Activated CD4-positive, alpha-beta T cell treated with anti-CD3 and anti-CD28 coated beads, Interleukin-2, amount 10 ng/mL, durations not matched to agents 24 days and 14 days (primary cell): ENCODE measurements at regions of chr15 and their contacts with region 1.

Region 1: DNA sequence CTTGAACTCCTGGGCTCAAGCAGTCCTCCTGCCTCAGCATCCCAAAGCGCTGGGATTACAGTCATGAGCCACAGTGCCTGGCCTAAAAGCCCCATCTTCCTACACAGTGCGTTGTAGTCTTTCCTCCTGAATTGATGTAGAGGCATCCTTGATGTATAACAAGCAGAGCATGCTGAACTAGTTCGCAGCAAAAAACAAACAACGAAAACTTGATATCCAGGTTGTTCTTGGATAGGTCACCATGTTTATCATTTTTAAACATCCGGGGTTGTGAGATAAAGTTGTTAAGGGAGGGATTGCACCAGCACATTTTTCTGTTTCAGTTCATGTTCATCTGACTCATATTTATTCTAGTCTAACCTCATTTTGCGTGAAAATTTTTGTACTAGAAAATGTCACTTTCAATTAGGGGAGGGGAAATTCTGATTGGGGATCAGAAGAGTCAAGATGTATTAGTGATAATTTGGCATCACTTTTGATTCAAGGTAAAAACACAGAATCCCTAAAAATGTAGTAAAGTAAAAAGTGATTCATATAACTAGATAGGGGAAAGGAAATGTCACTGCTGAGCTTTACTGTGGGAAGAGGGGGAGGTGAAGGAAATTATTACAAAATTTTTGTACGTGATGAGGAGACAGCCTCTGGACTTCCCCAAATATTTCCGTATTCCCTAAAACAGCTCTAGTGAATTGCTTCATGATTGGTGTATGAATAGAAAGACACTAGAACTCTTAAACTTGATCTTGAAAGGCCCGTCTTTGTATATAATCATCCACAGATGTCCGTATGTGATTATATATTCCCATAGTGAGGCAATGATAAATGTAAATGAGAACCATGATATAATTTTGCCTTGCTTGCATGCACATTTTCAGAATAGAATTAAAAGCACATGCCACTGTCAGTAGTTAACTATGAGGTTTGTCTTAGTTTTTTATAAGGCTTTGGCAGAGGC is 22.9 kb downstream of the RAB8B start:
- DNase-seq: no peak
- H3K4me3 Mint-ChIP-seq: peak overlapping the region; percentile 56
- H3K27ac Mint-ChIP-seq: peak overlapping the region; percentile 94
- H3K4me1 Mint-ChIP-seq: peaks cover 64% of the 10 kb centered on the region
- H3K27me3 Mint-ChIP-seq: no peaks in the 10 kb centered on the region

Region 2: GRCh38 chr15:63030101-63030551 is 182.2 kb before region 1 on chr15:
- intact Hi-C with region 1: no loop called
- DNase-seq: no peak
- H3K4me3 Mint-ChIP-seq: no peak overlapping the region
- H3K27ac Mint-ChIP-seq: no peak overlapping the region
- H3K4me1 Mint-ChIP-seq: no peaks in the 10 kb centered on the region
- H3K27me3 Mint-ChIP-seq: peaks cover 20% of the 10 kb centered on the region

Region 3: GRCh38 chr15:63157118-63157843 is 55.0 kb before region 1 on chr15 and contains the start of gene RPS27L:
- intact Hi-C with region 1: loop called (anchors 2 kb)
- DNase-seq: peak; percentile 97
- H3K4me3 Mint-ChIP-seq: peak within 1 kb of the TSS; percentile 100
- H3K27ac Mint-ChIP-seq: peak within 1 kb of the TSS; percentile 100
- H3K4me1 Mint-ChIP-seq: peaks cover 16% of the 10 kb centered on the region
- H3K27me3 Mint-ChIP-seq: no peaks in the 10 kb centered on the region
- total RNA-seq, gene RPS27L: 167 and 179 TPM in 2 replicates

Region 4: DNA sequence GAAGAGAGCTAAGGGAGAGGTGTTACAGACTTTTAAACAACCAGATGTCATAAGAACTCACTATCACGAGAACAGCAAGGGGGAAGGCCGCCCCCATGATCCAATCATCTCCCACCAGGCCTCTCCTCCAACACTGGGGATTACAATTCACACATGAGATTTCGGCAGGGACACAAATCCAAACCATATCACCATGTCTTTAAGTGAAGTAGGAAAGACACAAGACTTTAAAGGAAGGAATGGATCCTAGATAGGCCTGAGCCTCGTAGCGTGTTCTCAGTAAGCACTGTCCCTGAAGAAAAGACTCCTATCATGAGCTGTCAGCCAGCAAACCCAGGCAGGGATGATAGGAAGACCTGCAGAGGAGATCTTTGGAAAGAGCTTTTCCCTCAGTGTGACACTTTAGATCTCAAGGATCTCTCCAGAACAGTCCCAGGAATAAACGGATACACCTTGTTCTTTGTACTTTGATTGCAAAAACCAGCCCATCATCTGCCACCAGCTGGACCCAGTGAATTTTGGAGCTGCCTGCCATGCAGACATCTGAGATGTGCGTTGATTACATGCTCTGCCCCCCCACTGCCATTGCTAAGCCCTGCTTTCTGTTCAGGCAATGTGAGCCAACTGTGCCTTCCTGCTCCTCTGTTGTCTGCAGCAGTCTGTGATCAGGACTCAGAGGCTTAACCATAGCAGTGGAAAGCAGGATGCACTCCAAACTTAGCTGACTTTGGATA is 39.8 kb before region 1 on chr15:
- intact Hi-C with region 1: loop called (anchors 1 kb)
- DNase-seq: no peak
- H3K4me3 Mint-ChIP-seq: no peak overlapping the region
- H3K27ac Mint-ChIP-seq: no peak overlapping the region
- H3K4me1 Mint-ChIP-seq: peaks cover 3% of the 10 kb centered on the region
- H3K27me3 Mint-ChIP-seq: no peaks in the 10 kb centered on the region

Region 5: GRCh38 chr15:63198371-63199250 is 13.7 kb before region 1 on chr15:
- intact Hi-C with region 1: loop called (anchors 1 kb)
- DNase-seq: no peak
- H3K4me3 Mint-ChIP-seq: peak overlapping the region; percentile 13
- H3K27ac Mint-ChIP-seq: peak overlapping the region; percentile 54
- H3K4me1 Mint-ChIP-seq: peaks cover 81% of the 10 kb centered on the region
- H3K27me3 Mint-ChIP-seq: no peaks in the 10 kb centered on the region

Region 6: DNA sequence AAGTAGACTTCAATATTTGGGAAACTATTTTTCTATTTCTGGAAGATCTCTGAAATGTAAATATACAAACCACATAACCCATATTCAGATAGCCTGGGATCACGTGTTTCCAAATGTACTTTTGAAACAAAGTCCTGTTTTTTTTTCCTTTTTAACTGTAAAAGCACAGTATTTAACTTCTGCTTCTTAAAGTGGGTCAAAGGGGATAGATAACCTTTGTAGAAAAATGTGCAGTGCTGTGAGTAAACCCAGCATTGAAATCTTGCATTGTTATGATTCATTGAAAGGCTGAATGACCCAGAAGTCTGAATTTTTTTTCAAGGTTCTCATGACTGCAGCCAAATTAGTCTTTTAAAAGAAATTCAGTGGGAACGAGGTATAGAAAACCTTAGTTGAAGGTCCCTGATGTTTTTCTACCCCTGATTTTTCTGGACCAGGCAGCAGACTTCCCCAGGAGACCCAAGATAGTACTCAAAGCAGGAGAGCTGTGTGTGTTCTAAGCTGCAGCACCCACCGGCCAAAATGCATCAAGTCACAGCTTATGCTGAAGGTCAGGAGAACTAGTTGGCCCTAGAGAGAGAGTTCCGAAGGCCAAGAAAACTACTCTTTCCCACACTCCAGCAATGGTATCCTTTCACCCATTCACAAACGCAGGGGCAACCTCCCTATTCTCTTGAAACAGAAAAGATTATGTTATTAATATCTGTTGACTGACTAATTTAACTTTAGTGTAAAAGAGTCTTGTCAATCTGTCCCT is 21.5 kb after region 1 on chr15:
- intact Hi-C with region 1: loop called (anchors 1 kb)
- DNase-seq: no peak
- H3K4me3 Mint-ChIP-seq: no peak overlapping the region
- H3K27ac Mint-ChIP-seq: peak overlapping the region; percentile 66
- H3K4me1 Mint-ChIP-seq: peaks cover 50% of the 10 kb centered on the region
- H3K27me3 Mint-ChIP-seq: no peaks in the 10 kb centered on the region

Region 7: GRCh38 chr15:63246691-63247464 is 34.6 kb after region 1 on chr15:
- intact Hi-C with region 1: loop called (anchors 5 kb)
- DNase-seq: no peak
- H3K4me3 Mint-ChIP-seq: no peak overlapping the region
- H3K27ac Mint-ChIP-seq: no peak overlapping the region
- H3K4me1 Mint-ChIP-seq: peaks cover 33% of the 10 kb centered on the region
- H3K27me3 Mint-ChIP-seq: no peaks in the 10 kb centered on the region

Region 8: DNA sequence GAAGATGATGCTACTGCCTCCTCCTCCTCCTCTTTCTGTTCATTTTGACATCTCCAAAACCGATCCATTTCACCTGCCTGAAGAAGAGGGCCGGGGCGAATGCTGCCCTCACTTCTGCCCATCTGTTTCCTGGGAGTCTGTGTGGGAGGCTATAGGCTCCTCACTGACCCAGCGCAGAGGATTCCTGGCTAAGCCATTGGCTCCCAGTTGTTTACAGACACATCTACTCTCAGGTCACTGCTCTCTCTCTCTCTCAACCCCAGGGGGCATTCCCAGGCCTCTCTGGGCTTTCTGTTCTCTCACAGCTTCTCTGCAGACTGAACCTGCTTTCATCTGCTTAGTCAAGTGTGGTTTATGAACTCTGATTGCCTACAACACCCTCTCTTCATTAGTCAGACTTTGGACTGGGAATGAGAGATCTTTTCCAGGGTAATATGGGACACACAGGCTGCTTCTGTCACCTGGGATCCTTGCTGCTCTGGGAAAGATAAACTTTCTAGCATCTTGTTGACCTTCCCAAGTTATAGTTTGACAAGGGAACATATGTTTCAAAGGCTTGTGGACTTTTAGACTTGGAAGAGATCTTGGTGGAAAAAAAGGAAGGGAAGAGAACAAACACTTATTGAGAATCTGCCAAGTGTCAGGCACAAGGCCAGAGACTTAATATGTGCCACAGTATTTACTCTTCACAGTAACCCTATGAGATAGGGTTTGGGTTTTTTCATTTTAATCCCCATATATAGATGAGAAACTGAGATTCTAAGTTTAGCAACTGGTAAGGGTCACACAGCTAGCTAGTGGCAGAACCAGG is 261.9 kb after region 1 on chr15:
- intact Hi-C with region 1: loop called (anchors 1 kb)
- DNase-seq: peak; percentile 85
- H3K4me3 Mint-ChIP-seq: peak overlapping the region; percentile 11
- H3K27ac Mint-ChIP-seq: peak overlapping the region; percentile 95
- H3K4me1 Mint-ChIP-seq: peaks cover 41% of the 10 kb centered on the region
- H3K27me3 Mint-ChIP-seq: no peaks in the 10 kb centered on the region